ENCODE measurements at regions of chr10 and their contacts with region 1.

Region 1: GRCh38 chr10:124719213-124719851 is 24.8 kb downstream of the FAM53B start:
- DNase-seq: peak in 33 of 35 experiments; percentile 59 to 89 (median 74)
- ATAC-seq: peak; percentile 59 to 64 (median 62)
- H3K4me3 ChIP-seq: peak overlapping the region in 1 of 2 donors; percentile 26
- H3K4me3 Mint-ChIP-seq: peak overlapping the region; percentile 56 to 76 (median 63)
- H3K27ac ChIP-seq: peak overlapping the region; percentile 98
- H3K27ac Mint-ChIP-seq: peak overlapping the region; percentile 83 to 93
- H3K4me1 ChIP-seq: peaks cover 69 to 98% of the 10 kb centered on the region in 2 experiments
- H3K4me1 Mint-ChIP-seq: peaks cover 95 to 99% (median 98%) of the 10 kb centered on the region in 3 donors
- H3K27me3 ChIP-seq: no peaks in the 10 kb centered on the region
- H3K27me3 Mint-ChIP-seq: no peaks in the 10 kb centered on the region

Region 2: DNA sequence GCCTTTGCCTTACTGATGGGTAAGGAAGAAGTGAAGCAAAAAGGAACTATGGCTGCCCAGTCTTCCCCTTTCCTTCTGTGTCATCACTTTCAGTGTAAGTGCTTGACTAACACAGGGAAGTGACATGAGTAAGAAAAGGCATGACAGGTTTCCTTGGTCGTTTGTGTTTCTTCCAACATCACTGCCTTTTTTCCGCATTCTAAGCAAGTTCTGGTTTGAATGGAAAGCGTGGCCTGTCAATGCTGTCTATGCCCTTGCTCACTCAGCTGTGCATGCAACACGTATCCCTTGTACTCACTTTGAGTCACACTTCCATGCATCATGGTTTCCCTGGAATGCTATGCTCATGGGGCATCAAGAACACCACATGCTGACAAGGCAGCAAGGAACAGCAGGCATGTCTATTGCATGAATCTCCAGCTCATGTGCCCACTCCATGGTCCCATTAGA is 412.4 kb before region 1 on chr10:
- CTCF ChIA-PET with region 1: no interaction called
- POLR2A ChIA-PET with region 1: no interaction called
- DNase-seq: no peak
- ATAC-seq: no peak
- H3K4me3 ChIP-seq: no peak overlapping the region
- H3K4me3 Mint-ChIP-seq: no peak overlapping the region
- H3K27ac ChIP-seq: no peak overlapping the region
- H3K27ac Mint-ChIP-seq: no peak overlapping the region
- H3K4me1 ChIP-seq: no peaks in the 10 kb centered on the region
- H3K4me1 Mint-ChIP-seq: no peaks in the 10 kb centered on the region
- H3K27me3 ChIP-seq: peaks cover 0 to 21% of the 10 kb centered on the region in 2 experiments
- H3K27me3 Mint-ChIP-seq: peaks cover 0 to 2% of the 10 kb centered on the region in 2 donors

Region 3: GRCh38 chr10:124647421-124648130 is 71.8 kb before region 1 on chr10:
- CTCF ChIA-PET with region 1: interaction called in 1 of 2 experiments, 26 read pairs
- POLR2A ChIA-PET with region 1: interaction called in 1 of 2 experiments, 3 read pairs
- DNase-seq: peak; percentile 59 to 84 (median 72)
- ATAC-seq: peak; percentile 75 to 84 (median 78)
- H3K4me3 ChIP-seq: peak overlapping the region; percentile 35 to 52
- H3K4me3 Mint-ChIP-seq: peak overlapping the region; percentile 69 to 79 (median 70)
- H3K27ac ChIP-seq: peak overlapping the region; percentile 92
- H3K27ac Mint-ChIP-seq: peak overlapping the region; percentile 98 to 99
- H3K4me1 ChIP-seq: peaks cover 53 to 99% of the 10 kb centered on the region in 2 experiments
- H3K4me1 Mint-ChIP-seq: peaks cover 87 to 99% (median 92%) of the 10 kb centered on the region in 3 donors
- H3K27me3 ChIP-seq: no peaks in the 10 kb centered on the region
- H3K27me3 Mint-ChIP-seq: no peaks in the 10 kb centered on the region

Region 4: DNA sequence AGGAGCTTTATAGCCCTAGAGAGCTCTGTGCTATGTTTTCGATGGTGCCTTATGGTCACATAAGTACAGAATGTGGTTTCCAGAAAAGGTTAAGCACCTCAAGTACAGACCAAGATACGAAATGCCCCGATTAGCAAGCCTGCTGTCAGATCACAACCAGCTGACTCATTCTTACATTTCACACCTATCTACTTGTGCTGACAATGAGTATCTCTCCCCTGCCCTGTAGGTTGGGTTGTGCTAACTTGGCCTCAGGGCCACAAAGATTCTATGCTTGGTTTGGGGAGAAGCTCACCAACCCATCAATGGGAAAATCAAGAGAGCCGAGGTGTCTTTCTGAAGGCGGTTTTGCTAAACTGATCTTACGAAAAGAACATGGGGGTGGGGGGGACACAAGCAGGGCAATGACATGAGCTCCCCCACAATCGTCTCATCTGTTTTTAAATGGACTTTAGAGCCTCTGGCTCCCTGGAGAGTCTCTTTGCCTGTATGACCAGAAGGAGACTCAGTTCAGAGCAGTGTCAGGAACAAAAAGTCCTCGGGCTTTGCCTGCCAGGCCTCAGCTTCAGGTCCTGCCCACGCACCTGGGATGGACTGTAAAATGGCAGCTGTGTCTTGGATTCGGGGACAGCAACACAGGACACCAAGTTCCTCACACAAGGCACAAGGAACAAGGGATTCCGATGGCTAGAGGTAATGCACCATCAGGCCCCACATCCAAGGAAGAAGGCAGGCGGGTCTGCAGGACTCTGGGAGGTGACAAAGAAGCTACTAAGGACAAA is 30.3 kb before region 1 on chr10:
- CTCF ChIA-PET with region 1: interaction called in 1 of 2 experiments, 27 read pairs
- POLR2A ChIA-PET with region 1: interaction called, 3 to 4 read pairs
- DNase-seq: peak in 28 of 35 experiments; percentile 20 to 80 (median 43)
- ATAC-seq: peak; percentile 79 to 88 (median 80)
- H3K4me3 ChIP-seq: no peak overlapping the region
- H3K4me3 Mint-ChIP-seq: peak overlapping the region in 2 of 3 donors; percentile 34 to 46
- H3K27ac ChIP-seq: peak overlapping the region; percentile 61
- H3K27ac Mint-ChIP-seq: peak overlapping the region; percentile 91 to 93
- H3K4me1 ChIP-seq: peaks cover 16 to 95% of the 10 kb centered on the region in 2 experiments
- H3K4me1 Mint-ChIP-seq: peaks cover 61 to 87% (median 79%) of the 10 kb centered on the region in 3 donors
- H3K27me3 ChIP-seq: no peaks in the 10 kb centered on the region
- H3K27me3 Mint-ChIP-seq: no peaks in the 10 kb centered on the region

Region 5: GRCh38 chr10:124703778-124704427 is 15.4 kb before region 1 on chr10:
- CTCF ChIA-PET with region 1: interaction called, 5 to 21 read pairs
- POLR2A ChIA-PET with region 1: interaction called, 5 to 6 read pairs
- DNase-seq: no peak
- ATAC-seq: peak in 1 of 4 experiments; percentile 23
- H3K4me3 ChIP-seq: no peak overlapping the region
- H3K4me3 Mint-ChIP-seq: peak overlapping the region in 1 of 3 donors; percentile 72
- H3K27ac ChIP-seq: peak overlapping the region; percentile 93
- H3K27ac Mint-ChIP-seq: peak overlapping the region; percentile 99 to 100
- H3K4me1 ChIP-seq: peaks cover 42 to 98% of the 10 kb centered on the region in 2 experiments
- H3K4me1 Mint-ChIP-seq: peaks cover 95 to 100% (median 98%) of the 10 kb centered on the region in 3 donors
- H3K27me3 ChIP-seq: no peaks in the 10 kb centered on the region
- H3K27me3 Mint-ChIP-seq: no peaks in the 10 kb centered on the region

Region 6: DNA sequence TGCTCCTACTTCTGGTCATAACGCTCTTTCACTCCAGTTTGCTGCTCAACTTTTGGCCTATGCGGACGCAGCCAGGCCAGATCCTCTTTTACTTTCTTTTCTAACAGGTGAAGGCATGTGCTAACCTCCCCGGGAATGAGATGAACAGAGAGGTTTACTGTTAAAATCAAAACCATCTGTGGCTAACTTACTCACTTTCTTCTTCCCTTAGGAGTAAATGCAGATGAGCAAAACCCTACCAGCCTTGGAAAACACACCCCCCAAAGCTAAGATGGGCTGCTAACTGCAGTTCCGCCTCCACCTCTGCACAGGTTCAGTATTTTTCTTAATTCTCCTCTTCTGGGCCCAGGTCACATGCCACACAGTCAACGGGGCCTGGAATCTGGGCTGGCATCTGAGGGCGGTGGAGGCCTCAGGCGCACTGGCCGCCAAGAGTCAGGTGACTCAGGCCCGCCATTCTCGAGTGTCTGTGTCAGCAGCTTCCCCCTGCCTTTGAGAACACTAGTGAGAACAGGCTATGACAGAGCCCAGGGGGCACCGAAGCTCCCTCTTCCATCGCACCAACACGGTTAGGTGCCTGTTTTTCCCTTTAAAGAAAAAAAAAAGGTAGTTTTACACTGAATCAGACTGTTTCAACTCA is 13.7 kb after region 1 on chr10:
- CTCF ChIA-PET with region 1: interaction called, 8 to 70 read pairs
- POLR2A ChIA-PET with region 1: interaction called, 4 to 8 read pairs
- DNase-seq: peak in 7 of 35 experiments; percentile 33 to 63 (median 45)
- ATAC-seq: peak; percentile 20 to 53 (median 27)
- H3K4me3 ChIP-seq: peak overlapping the region in 1 of 2 donors; percentile 20
- H3K4me3 Mint-ChIP-seq: peak overlapping the region; percentile 40 to 86 (median 69)
- H3K27ac ChIP-seq: peak overlapping the region; percentile 90
- H3K27ac Mint-ChIP-seq: peak overlapping the region; percentile 90 to 93
- H3K4me1 ChIP-seq: peaks cover 48 to 98% of the 10 kb centered on the region in 2 experiments
- H3K4me1 Mint-ChIP-seq: peaks cover 91 to 99% (median 98%) of the 10 kb centered on the region in 3 donors
- H3K27me3 ChIP-seq: no peaks in the 10 kb centered on the region
- H3K27me3 Mint-ChIP-seq: no peaks in the 10 kb centered on the region